PC-3 (cell line): ENCODE measurements at regions of chr19 and their contacts with region 1.

Region 1: DNA sequence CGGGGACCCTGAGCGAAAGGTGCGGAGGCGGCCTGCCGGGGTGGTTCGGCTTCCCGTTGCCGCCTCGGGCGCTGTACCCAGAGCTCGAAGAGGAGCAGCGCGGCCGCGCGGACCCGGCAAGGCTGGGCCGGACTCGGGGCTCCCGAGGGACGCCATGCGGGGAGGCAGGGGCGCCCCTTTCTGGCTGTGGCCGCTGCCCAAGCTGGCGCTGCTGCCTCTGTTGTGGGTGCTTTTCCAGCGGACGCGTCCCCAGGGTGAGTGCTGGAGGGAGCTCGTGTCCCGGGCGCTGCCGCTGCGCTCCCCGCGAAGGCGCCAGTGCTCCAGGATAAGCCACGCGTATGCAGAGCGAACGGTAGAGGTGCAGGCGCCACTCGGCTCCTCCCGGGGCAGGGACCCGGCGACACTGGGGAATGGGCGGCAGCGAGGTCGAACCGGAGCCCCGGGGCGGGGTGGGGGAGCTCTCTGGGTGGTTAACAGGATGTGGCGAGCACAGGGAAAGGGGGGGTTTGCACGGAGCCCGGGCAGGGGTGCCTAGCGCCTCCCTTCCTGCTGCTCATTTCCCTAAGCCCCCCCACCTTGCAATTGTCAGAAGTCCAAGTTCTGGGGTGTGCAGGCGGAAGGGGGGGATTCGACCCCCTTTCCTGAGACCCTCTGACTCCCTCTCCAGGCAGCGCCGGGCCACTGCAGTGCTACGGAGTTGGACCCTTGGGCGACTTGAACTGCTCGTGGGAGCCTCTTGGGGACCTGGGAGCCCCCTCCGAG is at the start of gene IL27RA:
- DNase-seq: peak; percentile 63
- ATAC-seq: peak; percentile 80
- H3K4me3 ChIP-seq: peak within 1 kb of the TSS; percentile 83
- H3K27ac ChIP-seq: no peak within 1 kb of the TSS
- H3K4me1 ChIP-seq: no peaks in the 10 kb centered on the region
- H3K27me3 ChIP-seq: no peaks in the 10 kb centered on the region
- CTCF ChIP-seq: peak; percentile 74
- total RNA-seq, gene IL27RA: 14.2 and 14.7 TPM in 2 replicates

Region 2: GRCh38 chr19:13880059-13881043 is 151.5 kb before region 1 on chr19:
- CTCF ChIA-PET with region 1: no interaction called
- POLR2A ChIA-PET with region 1: no interaction called
- intact Hi-C with region 1: loop called (anchors 2 kb)
- DNase-seq: peak; percentile 99
- ATAC-seq: peak; percentile 89
- H3K4me3 ChIP-seq: peak overlapping the region; percentile 54
- H3K27ac ChIP-seq: peak overlapping the region; percentile 62
- H3K4me1 ChIP-seq: peaks cover 11% of the 10 kb centered on the region
- H3K27me3 ChIP-seq: no peaks in the 10 kb centered on the region
- CTCF ChIP-seq: peak; percentile 99

Region 3: GRCh38 chr19:13993590-13994300 is 38.2 kb before region 1 on chr19:
- CTCF ChIA-PET with region 1: interaction called, 14 read pairs
- POLR2A ChIA-PET with region 1: no interaction called
- intact Hi-C with region 1: no loop called
- DNase-seq: no peak
- ATAC-seq: no peak
- H3K4me3 ChIP-seq: no peak overlapping the region
- H3K27ac ChIP-seq: no peak overlapping the region
- H3K4me1 ChIP-seq: no peaks in the 10 kb centered on the region
- H3K27me3 ChIP-seq: no peaks in the 10 kb centered on the region
- CTCF ChIP-seq: no peak

Region 4: GRCh38 chr19:14248578-14249011 is 216.7 kb after region 1 on chr19:
- CTCF ChIA-PET with region 1: no interaction called
- POLR2A ChIA-PET with region 1: interaction called, 22 read pairs
- intact Hi-C with region 1: no loop called
- DNase-seq: peak; percentile 43
- ATAC-seq: peak; percentile 74
- H3K4me3 ChIP-seq: peak overlapping the region; percentile 62
- H3K27ac ChIP-seq: no peak overlapping the region
- H3K4me1 ChIP-seq: peaks cover 5% of the 10 kb centered on the region; the same call in 1 of the 2 replicates
- H3K27me3 ChIP-seq: no peaks in the 10 kb centered on the region
- CTCF ChIP-seq: no peak